MCF 10A (cell line): ENCODE measurements at regions of chr5 and their contacts with region 1.

Region 1: DNA sequence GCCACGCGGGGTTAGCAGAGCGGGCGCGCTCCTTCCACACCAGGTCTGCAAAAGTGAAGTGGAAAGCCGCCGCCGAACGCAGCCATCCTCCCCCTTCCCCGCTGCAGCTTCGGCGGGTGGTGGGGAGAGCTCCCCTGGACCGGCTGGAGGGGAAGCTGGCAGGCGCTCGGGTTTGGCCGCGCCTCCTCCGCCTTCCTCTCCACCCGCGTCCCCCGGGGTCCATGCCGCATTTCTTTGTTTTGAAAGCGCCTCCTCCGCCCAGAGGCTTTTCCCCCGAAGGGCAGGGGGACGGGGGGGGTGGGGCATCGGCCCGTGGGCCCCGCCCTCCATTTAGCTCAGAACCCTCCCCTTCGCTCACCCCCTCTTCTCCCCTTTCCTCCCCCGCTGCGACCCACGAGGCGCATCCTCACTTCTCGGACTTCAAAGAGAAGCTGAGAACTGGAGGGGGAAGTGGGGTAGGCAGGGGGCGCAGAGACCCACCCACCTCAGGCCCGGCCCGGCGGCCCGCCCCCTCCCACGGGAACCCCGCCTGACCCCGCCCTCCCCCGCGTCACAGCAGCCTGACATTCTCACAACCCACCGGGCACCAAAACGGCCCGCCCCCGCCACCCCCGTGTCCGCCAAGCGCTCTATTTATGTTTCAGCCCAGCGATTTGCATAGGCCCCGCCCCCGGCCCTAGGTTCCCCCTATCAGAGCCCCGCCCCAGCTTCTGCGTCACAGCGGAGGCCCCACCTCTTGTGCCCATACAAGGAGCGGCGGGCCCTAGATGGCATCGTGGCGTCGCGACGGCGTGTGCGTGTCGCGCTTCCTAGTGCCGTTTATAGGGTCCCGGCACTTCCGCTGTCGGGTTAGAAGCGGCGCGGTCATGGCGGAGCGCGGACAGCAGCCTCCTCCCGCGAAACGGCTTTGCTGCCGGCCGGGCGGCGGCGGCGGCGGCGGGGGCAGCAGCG is at the start of gene ZSWIM6:
- DNase-seq: peak; percentile 99
- H3K4me3 Mint-ChIP-seq: peak within 1 kb of the TSS; percentile 76
- H3K27ac Mint-ChIP-seq: peak within 1 kb of the TSS; percentile 93
- H3K4me1 Mint-ChIP-seq: peaks cover 45% of the 10 kb centered on the region
- H3K27me3 Mint-ChIP-seq: no peaks in the 10 kb centered on the region
- CTCF ChIP-seq: no peak
- total RNA-seq, gene ZSWIM6: 12.0 and 13.5 TPM in 2 replicates

Region 2: GRCh38 chr5:60960591-60960990 is 371.1 kb before region 1 on chr5:
- CTCF ChIA-PET with region 1: interaction called, 4 read pairs
- POLR2A ChIA-PET with region 1: interaction called, 23 read pairs
- intact Hi-C with region 1: no loop called
- DNase-seq: peak; percentile 26
- H3K4me3 Mint-ChIP-seq: no peak overlapping the region
- H3K27ac Mint-ChIP-seq: no peak overlapping the region
- H3K4me1 Mint-ChIP-seq: no peaks in the 10 kb centered on the region
- H3K27me3 Mint-ChIP-seq: no peaks in the 10 kb centered on the region
- CTCF ChIP-seq: peak; percentile 48

Region 3: GRCh38 chr5:61280205-61280604 is 51.5 kb before region 1 on chr5:
- CTCF ChIA-PET with region 1: interaction called, 3 read pairs
- POLR2A ChIA-PET with region 1: interaction called, 20 read pairs
- intact Hi-C with region 1: loop called (anchors 1 kb)
- DNase-seq: peak; percentile 92
- H3K4me3 Mint-ChIP-seq: no peak overlapping the region
- H3K27ac Mint-ChIP-seq: no peak overlapping the region
- H3K4me1 Mint-ChIP-seq: peaks cover 38% of the 10 kb centered on the region
- H3K27me3 Mint-ChIP-seq: no peaks in the 10 kb centered on the region
- CTCF ChIP-seq: no peak

Region 4: DNA sequence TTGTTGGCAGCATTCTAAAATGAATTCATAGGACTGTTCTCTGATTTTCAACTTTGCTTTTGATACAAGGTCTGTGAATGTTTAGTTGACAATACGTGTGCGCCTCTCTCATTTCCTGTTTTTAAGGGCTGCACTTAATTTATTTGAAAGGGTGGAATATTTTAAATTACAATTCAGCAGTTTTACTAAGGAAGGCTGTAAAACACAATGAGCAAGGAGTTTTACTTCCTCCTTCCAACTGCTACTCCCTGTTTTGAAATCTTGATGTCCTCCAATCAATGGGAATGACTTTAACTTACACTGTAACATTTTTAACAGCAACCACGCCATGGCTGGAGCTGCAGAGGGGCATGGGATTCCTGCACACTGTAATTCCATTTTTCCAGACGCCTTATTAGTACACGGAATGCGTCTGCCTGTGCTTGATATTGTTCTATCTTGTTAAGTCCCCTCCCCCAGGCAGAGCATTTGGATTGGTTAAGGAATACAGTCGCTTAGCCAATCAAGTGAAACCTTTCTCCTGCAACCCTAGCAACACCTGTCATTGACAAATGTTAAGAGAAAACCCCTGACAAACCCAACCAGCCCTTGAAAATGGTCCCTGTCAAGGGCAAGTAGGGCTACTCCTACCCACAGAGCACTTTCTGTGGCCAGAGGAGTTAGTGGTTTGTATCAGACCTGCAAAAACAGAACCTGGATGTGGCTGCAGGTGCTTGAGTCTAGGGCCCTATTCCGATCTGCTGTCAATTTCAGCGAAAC is 12.1 kb before region 1 on chr5:
- CTCF ChIA-PET with region 1: interaction called, 14 read pairs
- POLR2A ChIA-PET with region 1: interaction called, 28 read pairs
- intact Hi-C with region 1: no loop called
- DNase-seq: no peak
- H3K4me3 Mint-ChIP-seq: no peak overlapping the region
- H3K27ac Mint-ChIP-seq: no peak overlapping the region
- H3K4me1 Mint-ChIP-seq: peaks cover 13% of the 10 kb centered on the region
- H3K27me3 Mint-ChIP-seq: no peaks in the 10 kb centered on the region
- CTCF ChIP-seq: no peak

Region 5: DNA sequence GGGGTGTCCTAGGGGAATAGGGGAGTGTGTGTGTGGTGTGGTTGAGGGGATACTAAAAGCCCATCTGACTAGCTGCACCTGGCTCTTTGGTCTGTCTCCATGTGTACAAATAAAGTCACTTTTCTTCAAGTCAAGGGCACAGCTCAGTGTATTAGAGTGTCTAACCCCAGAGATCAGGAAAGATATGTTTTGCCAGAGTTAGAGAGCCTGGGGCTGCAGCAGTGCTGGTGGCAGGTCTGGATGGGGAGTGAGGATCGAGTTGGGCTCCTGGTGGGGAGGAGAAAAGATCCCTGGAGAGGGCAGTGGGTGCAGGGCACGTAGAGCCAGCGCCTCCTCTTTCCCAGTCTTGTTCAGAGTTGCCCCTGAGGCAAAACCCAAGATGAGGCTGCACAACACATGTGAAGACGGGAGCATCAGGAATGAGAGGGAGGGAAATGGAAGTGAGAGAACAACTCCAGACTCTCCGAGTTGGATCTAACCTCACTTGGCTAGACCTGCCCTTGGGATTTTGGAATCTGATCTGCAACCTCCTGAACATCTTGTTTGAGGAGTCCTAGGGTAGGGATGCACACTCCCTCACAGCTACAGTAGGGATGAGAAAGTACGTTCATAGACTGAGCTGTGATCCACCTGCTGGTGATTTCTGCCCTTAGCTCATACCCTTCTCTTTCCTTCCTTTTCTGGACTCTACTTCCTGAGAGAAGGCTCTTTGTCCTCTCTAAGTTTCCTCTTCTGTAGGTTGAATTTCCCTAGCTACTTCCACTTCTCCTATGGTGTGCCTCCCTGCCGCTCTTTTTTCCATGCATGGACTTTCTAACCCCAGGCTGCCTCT is 310.3 kb after region 1 on chr5:
- CTCF ChIA-PET with region 1: no interaction called
- POLR2A ChIA-PET with region 1: interaction called, 3 read pairs
- intact Hi-C with region 1: loop called (anchors 5 kb)
- DNase-seq: no peak
- H3K4me3 Mint-ChIP-seq: no peak overlapping the region
- H3K27ac Mint-ChIP-seq: no peak overlapping the region
- H3K4me1 Mint-ChIP-seq: peaks cover 5% of the 10 kb centered on the region
- H3K27me3 Mint-ChIP-seq: no peaks in the 10 kb centered on the region
- CTCF ChIP-seq: no peak

Region 6: DNA sequence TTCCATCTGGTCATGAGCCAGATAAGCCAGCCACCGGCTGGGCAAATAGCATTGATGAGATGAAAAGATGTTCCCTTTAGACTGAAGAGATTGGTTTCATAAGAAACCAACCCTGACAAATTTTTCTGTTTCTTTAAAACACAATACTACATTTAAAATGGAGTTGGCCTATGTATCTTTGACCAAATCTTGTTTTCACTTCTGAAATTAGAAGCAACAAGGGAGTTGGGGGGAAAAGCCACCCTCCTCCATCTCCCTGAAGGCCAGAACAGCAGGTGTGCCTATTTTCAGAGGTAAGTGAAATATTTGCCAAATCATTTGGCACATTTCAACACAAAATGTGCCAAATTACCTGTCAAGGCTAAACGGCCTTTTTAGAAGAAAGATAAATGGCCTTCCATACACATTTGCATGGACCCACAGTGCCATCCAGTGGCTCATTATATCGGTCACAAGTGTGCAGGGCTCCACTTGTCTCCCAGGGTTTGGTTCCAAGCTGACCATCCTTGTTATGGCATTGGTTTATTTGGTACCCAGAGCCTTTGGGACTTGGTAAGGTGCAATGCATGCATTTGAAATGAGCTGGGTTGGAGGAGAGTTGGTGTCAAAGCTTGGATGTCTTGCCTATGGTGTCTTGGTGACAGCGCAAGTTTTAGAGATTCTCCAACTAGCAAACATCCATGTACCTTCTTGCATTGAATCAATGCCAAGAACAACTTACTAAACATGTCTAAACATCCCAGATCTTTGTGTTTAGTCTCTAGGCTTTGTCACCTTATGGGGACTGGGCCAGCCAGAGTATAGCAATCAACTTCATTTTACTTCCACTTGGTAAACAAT is 602.3 kb after region 1 on chr5:
- CTCF ChIA-PET with region 1: interaction called, 4 read pairs
- POLR2A ChIA-PET with region 1: no interaction called
- intact Hi-C with region 1: loop called (anchors 5 kb)
- DNase-seq: peak; percentile 88
- H3K4me3 Mint-ChIP-seq: no peak overlapping the region
- H3K27ac Mint-ChIP-seq: no peak overlapping the region
- H3K4me1 Mint-ChIP-seq: peaks cover 19% of the 10 kb centered on the region
- H3K27me3 Mint-ChIP-seq: no peaks in the 10 kb centered on the region
- CTCF ChIP-seq: peak; percentile 78